Posterior cingulate gyrus (tissue), 11 donors: ENCODE measurements at regions of chr17 and their contacts with region 1.

Region 1: GRCh38 chr17:39231591-39232551 is 6.1 kb upstream of the STAC2 start:
- DNase-seq: peak in 7 of 10 donors; percentile 37 to 93 (median 58)

Region 2: GRCh38 chr17:38982858-38983746 is 248.8 kb before region 1 on chr17:
- intact Hi-C with region 1: loop called (anchors 2 kb)
- DNase-seq: peak in 3 of 10 donors; percentile 19 to 40 (median 24)